ENCODE measurements at regions of chr16 and their contacts with region 1.

Region 1: DNA sequence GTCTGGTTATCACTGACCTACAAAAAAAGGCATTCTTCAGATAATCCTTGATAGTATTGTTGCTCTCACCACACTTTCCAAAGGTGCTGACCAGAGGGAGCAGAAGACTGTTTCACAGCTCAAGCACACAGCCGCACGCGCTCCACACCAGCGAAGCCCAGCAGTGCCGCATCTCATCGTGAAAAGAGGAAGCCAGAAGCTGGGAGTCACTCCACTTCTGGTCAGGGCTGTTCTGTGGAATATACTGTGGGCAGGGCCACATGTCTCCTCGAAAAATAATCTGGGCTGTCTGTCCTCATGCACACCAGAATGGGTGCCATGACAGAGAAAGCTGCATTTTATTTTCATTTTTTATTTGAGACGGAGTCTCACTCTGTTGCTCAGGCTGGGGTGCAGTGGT is 7.3 kb upstream of the PRSS36 start:
- DNase-seq: no peak
- H3K4me3 ChIP-seq: no peak overlapping the region
- CTCF ChIP-seq: no peak
- POLR2A ChIP-seq: no peak

Region 2: DNA sequence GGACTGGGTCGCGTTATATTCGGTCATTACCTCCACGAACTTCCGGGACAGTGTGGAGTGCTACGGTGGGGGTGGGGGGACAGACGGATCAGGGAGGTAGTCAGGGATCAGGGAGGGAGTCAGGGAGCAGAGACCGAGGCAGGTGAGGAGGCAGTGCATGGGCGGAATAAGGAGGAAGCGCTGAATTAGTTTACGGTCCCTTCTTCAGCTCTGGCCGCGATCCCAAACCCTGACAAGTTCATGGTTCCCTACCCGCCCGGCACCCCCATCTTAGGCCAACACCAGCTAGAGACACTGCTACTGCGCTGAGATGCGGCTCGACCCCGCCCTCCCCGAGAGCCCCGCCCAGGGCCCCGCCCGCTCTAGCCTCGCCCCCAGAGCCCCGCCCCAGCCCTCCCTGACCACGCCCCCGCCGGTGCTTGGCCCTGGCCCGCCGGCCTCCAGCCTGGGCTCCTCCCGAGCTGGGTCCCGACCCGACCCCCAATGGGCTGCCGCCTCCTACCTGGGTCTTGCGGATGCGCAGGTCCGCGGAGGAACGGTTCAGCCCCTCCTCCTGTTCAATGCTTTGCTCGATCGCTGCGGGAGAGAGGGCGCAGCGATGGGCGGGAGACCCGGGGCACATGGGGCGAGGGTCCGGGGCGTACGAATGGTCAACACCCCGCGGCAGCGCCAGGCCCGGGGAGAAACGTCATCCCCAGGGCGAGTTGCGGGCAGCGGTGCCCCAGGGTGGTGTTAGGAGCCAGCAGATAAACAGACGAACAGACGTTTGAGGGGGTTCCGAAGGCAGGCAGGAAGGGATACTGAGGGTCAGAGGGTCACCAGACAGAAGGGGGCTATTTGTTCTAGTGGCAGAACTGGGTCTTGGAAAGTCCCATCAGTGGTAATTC is 159.9 kb before region 1 on chr16:
- intact Hi-C with region 1: no loop called
- DNase-seq: peak; percentile 82 to 96
- H3K4me3 ChIP-seq: peak overlapping the region; percentile 38
- CTCF ChIP-seq: no peak
- POLR2A ChIP-seq: no peak

Region 3: GRCh38 chr16:31430380-31431052 is 273.4 kb after region 1 on chr16:
- intact Hi-C with region 1: loop called (anchors 10 kb)
- DNase-seq: no peak
- H3K4me3 ChIP-seq: no peak overlapping the region
- CTCF ChIP-seq: no peak
- POLR2A ChIP-seq: no peak